Psoas muscle (tissue), 8 donors: ENCODE measurements at regions of chr20 and their contacts with region 1.

Region 1: GRCh38 chr20:19284400-19285178 is 72.1 kb downstream of the SLC24A3 start:
- DNase-seq: no peak
- ATAC-seq: peak in 3 of 4 donors; percentile 59 to 78 (median 70)
- H3K4me3 ChIP-seq: no peak overlapping the region
- H3K27ac ChIP-seq: peak overlapping the region; percentile 37
- H3K4me1 ChIP-seq: peaks cover 15% of the 10 kb centered on the region
- H3K27me3 ChIP-seq: no peaks in the 10 kb centered on the region
- CTCF ChIP-seq: no peak

Region 2: DNA sequence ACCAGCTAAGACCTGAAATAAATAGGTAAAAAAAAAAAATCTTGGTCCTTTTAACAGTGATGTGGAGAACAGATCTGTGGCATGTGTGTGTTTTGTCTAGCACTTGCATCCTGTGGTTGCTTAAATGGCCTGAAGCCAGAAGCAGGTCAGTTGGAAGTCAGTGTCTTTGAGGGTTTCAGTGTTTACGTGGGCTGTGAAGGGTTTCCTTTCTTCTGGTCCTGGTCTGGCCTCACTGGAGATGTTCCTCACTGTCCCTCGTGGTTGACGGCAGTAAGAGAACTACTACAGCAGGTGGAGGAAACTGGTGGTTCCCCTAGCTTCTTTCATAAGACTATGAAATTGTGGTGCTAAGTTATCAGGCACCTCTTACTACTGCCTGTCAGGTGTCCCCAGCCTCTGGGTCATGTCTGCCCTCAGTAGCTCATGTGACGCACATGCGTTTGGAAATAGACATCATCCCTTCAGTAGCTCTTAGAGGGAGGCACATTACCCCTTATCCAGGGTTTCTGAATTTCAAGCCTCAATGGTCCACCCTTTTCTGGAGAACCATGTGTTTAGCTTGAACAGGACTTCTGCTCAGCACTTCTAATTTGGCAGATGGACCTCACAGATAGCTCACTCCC is 530.4 kb before region 1 on chr20:
- intact Hi-C with region 1: no loop called
- DNase-seq: no peak
- ATAC-seq: no peak
- H3K4me3 ChIP-seq: no peak overlapping the region
- H3K27ac ChIP-seq: no peak overlapping the region
- H3K4me1 ChIP-seq: no peaks in the 10 kb centered on the region
- H3K27me3 ChIP-seq: no peaks in the 10 kb centered on the region
- CTCF ChIP-seq: no peak

Region 3: DNA sequence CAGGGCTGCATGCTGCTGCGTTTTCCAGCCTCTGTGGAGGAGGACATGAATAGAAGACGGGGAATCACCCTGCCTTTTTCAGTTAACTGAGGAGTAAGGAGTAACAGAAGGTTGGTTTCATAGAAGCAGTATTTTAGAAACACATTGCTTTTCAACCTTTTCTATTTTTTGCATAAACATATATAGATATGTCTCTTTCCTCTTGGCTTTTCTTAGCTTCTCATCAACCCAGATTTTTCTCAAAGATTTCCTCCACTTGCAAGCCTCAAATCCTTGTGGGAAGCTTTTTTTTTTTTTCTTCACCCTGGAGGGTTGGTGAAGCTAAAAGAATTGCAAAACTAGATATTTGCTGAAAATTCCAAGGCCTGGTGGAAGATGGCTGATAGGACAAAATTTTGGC is 66.2 kb before region 1 on chr20:
- intact Hi-C with region 1: loop called in 1 of 2 experiments (anchors 5 kb)
- DNase-seq: no peak
- ATAC-seq: no peak
- H3K4me3 ChIP-seq: no peak overlapping the region
- H3K27ac ChIP-seq: no peak overlapping the region
- H3K4me1 ChIP-seq: peaks cover 22% of the 10 kb centered on the region
- H3K27me3 ChIP-seq: no peaks in the 10 kb centered on the region
- CTCF ChIP-seq: no peak